Naive thymus-derived CD4-positive, alpha-beta T cell (primary cell): ENCODE measurements at regions of chr16 and their contacts with region 1.

Region 1: DNA sequence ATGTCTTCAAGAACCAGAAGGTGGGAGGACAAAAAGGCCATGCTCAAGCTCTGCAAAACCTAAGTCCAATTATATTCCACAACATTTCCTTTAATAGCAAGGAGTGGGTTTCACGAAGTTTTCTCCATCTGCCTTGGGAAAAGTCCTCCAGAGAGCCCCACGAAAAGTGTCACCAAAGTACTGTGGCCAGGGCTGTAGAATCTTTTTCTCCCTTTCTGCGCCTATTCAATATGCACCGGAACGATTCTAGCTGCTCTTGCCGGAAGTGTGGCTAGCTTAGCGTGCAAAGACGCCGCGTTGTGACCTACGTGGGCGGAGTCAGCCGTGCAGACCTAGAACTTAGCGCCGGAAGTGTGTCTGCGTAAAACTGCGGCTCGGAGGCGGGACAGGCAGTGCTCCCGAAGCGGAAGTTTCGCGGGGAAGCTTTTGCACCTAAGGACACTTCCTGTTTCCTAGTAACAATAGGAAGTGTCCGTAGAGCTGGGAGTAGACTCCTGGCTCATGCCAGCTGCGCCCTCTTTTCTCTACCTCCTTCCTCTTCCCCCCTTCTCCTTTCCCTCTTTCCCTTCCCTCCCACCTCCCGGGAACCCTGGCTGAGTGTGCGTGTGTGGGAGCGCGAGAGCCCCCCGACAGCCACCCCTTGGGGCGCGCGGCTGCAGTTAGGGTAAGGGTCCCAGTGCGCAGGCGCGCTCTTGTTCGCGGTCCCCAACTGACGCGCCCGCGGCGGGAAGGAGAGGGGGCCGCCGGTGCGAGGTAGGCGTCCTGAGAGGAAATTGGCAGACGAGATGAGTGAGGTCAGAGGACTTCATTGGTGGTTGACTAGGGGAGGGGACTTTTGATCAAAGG is at the starts of genes ZNF646 and ZNF668:
- DNase-seq: peak; percentile 84 to 99 (median 96)
- ATAC-seq: peak; percentile 90
- H3K4me3 ChIP-seq: peak within 1 kb of the TSS; percentile 89
- H3K4me3 Mint-ChIP-seq: peak within 1 kb of the TSS; percentile 85 to 99 (median 96)
- H3K27ac ChIP-seq: peak within 1 kb of the TSS; percentile 91
- H3K27ac Mint-ChIP-seq: peak within 1 kb of the TSS; percentile 92 to 98 (median 97)
- H3K4me1 ChIP-seq: peaks cover 9 to 18% of the 10 kb centered on the region in 2 donors
- H3K4me1 Mint-ChIP-seq: peaks cover 32 to 48% (median 36%) of the 10 kb centered on the region in 7 donors
- H3K27me3 ChIP-seq: no peaks in the 10 kb centered on the region
- H3K27me3 Mint-ChIP-seq: no peaks in the 10 kb centered on the region
- total RNA-seq, gene ZNF646: 22.2 to 49.1 (median 30.4) TPM
- total RNA-seq, gene ZNF668: 10.7 to 15.2 (median 12.6) TPM

Region 2: DNA sequence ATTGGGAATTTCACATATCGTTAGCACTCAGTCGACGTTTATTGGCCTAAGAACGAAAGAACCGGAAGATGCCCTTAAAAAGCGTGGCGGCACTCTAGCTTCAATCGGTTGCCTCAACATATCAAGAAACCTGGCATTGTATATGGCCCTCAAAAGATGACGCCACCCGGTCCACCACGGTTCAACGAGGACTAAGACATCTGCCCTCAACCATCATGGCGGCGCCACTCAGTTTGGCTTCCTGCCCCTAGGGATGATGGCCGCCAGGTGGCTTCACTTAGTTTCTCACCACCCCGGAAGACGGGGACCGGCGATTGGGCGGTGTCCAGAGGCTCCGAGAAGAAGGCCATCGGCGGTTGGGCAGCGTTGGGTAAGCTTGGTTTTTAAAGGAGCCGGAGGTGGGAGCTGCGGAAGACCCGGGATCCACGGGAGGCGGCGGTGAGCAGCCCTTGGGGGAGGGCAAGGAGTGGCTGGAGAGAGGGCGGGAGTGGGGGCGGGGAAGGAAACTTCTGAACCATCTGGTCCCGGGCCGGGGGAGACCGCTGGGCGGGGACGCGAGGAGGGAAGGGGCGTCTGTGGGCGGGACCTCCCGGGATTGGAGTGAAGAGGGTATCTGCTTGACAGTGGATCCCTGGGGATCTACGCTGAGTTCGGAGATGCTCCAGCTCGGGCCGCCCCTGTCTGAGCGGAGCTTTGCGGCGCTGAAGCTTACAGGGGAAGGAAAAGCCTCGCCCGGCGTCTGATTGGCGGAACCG is 423.6 kb before region 1 on chr16 and contains the start of gene PRR14:
- CTCF ChIA-PET with region 1: no interaction called
- POLR2A ChIA-PET with region 1: no interaction called
- intact Hi-C with region 1: loop called (anchors 1 to 2 kb)
- DNase-seq: peak; percentile 87 to 99 (median 96)
- ATAC-seq: peak; percentile 93
- H3K4me3 ChIP-seq: peak within 1 kb of the TSS; percentile 100
- H3K4me3 Mint-ChIP-seq: peak within 1 kb of the TSS; percentile 86 to 100 (median 98)
- H3K27ac ChIP-seq: peak within 1 kb of the TSS; percentile 90
- H3K27ac Mint-ChIP-seq: peak within 1 kb of the TSS; percentile 95 to 99 (median 98)
- H3K4me1 ChIP-seq: peaks cover 9 to 10% of the 10 kb centered on the region in 2 donors
- H3K4me1 Mint-ChIP-seq: peaks cover 19 to 39% (median 22%) of the 10 kb centered on the region in 7 donors
- H3K27me3 ChIP-seq: no peaks in the 10 kb centered on the region
- H3K27me3 Mint-ChIP-seq: peaks cover 0 to 3% (median 0%) of the 10 kb centered on the region in 5 donors
- total RNA-seq, gene PRR14: 57.6 to 91.9 (median 82.5) TPM

Region 3: GRCh38 chr16:30874821-30875717 is 199.1 kb before region 1 on chr16:
- CTCF ChIA-PET with region 1: no interaction called
- POLR2A ChIA-PET with region 1: interaction called, 3 read pairs
- intact Hi-C with region 1: loop called in 1 of 2 experiments (anchors 1 kb)
- DNase-seq: peak; percentile 78 to 90 (median 87)
- ATAC-seq: peak; percentile 97
- H3K4me3 ChIP-seq: peak overlapping the region; percentile 83
- H3K4me3 Mint-ChIP-seq: peak overlapping the region; percentile 84 to 98 (median 97)
- H3K27ac ChIP-seq: peak overlapping the region; percentile 87
- H3K27ac Mint-ChIP-seq: peak overlapping the region; percentile 79 to 99 (median 95)
- H3K4me1 ChIP-seq: peaks cover 11 to 25% of the 10 kb centered on the region in 2 donors
- H3K4me1 Mint-ChIP-seq: peaks cover 21 to 40% (median 32%) of the 10 kb centered on the region in 7 donors
- H3K27me3 ChIP-seq: no peaks in the 10 kb centered on the region
- H3K27me3 Mint-ChIP-seq: no peaks in the 10 kb centered on the region

Region 4: DNA sequence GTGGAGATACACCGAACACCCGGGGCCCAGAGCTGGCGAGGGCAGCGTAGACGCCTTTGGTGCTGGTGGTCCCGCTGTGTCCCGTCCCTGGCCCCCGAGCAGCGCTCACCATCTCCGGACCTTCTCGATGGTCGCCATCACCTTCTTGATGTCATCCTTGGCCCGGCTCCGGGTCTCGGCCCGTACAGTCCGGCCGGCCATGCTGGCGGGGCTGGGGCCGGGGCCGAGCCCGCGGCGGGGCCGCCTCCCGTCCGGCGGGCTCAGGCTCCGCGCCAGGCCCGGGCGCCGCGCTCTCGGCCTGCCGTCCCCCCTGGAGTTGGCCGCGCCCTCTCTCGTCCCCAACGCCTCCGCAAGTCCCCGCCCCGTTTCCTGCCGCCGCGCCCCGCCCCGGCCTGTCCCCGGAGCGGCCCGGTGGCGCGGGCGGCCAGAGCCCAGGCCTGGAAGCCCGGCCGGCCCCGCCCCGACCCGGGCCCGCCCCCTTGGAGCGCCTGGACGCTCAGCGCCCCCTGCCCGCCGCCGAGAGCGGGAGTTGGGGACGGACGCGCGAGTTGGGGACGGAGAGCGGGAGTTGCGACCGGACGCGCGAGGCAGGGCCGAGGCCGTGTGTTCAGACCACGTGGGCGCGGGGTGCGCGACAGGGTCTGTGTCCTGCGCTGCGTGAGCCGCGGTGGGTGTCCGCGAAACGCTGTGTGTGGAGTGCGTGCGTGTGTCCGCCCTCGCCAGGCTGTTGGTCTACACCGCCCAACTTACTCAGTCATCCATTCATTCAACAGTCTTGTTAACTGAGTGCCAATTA is 180.2 kb before region 1 on chr16 and contains the start of gene BCL7C:
- CTCF ChIA-PET with region 1: no interaction called
- POLR2A ChIA-PET with region 1: no interaction called
- intact Hi-C with region 1: no loop called
- DNase-seq: peak; percentile 48 to 96 (median 61)
- ATAC-seq: peak; percentile 85
- H3K4me3 ChIP-seq: peak within 1 kb of the TSS; percentile 82
- H3K4me3 Mint-ChIP-seq: peak within 1 kb of the TSS; percentile 84 to 96 (median 90)
- H3K27ac ChIP-seq: peak within 1 kb of the TSS; percentile 82
- H3K27ac Mint-ChIP-seq: peak within 1 kb of the TSS; percentile 80 to 94 (median 91)
- H3K4me1 ChIP-seq: peaks cover 25 to 34% of the 10 kb centered on the region in 2 donors
- H3K4me1 Mint-ChIP-seq: peaks cover 26 to 60% (median 48%) of the 10 kb centered on the region in 7 donors
- H3K27me3 ChIP-seq: no peaks in the 10 kb centered on the region
- H3K27me3 Mint-ChIP-seq: no peaks in the 10 kb centered on the region
- total RNA-seq, gene BCL7C: 17.2 to 23.7 (median 22.7) TPM

Region 5: DNA sequence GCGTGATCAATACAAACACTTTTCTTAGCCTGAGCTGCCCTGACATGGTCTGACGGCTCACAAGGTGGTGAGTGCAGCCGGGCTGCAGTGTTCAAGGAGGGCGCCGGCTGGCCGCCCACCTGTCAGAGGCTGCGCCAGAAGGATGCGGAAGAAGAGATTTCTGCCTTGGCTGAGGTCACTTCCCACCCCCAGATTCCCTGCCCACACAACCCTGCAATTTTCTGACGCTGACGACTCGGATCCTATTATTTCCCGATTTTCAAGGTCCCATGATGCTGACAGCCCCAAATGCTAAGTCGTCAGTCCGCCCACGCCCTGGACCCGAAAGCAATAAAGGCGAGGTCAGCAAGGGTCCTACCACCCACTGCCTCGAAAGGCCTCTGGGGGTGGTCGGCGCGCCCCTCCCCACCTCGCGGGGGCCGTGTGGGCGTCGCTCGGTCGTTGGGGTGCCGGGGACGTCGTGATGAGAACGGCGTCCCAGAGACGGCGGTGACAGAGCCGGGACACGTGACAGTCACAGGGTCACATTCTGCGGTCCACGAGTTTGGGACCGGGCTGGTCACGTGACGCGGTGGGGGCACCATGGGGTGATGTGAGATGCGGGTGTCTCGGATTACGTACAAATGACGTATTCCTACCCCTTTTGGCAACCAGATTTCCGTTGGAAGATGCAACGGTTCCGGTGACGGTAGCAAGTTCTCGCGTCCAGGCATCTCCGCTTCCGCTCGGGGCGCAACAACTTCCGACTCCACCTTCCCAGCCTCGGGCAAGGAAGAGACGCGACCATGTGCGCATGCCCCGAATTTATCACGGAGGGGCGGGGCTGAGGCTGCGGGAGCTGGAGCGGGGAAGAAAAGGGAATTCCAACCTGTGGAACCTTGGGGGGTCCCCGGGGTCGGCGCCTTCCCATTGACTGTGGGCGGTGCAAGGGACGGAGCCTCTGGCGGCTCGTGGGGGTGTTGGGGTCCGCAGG is 41.2 kb before region 1 on chr16 and contains the start of gene STX4:
- CTCF ChIA-PET with region 1: no interaction called
- POLR2A ChIA-PET with region 1: interaction called, 29 read pairs
- intact Hi-C with region 1: loop called (anchors 1 kb)
- DNase-seq: peak; percentile 90 to 100 (median 97)
- ATAC-seq: peak; percentile 89
- H3K4me3 ChIP-seq: peak within 1 kb of the TSS; percentile 82
- H3K4me3 Mint-ChIP-seq: peak within 1 kb of the TSS; percentile 78 to 100 (median 96)
- H3K27ac ChIP-seq: peak within 1 kb of the TSS; percentile 93
- H3K27ac Mint-ChIP-seq: peak within 1 kb of the TSS; percentile 84 to 99 (median 97)
- H3K4me1 ChIP-seq: peaks cover 14 to 16% of the 10 kb centered on the region in 2 donors
- H3K4me1 Mint-ChIP-seq: peaks cover 15 to 35% (median 22%) of the 10 kb centered on the region in 7 donors
- H3K27me3 ChIP-seq: no peaks in the 10 kb centered on the region
- H3K27me3 Mint-ChIP-seq: peaks cover 0 to 3% (median 0%) of the 10 kb centered on the region in 5 donors
- total RNA-seq, gene STX4: 77.9 to 114 (median 100) TPM

Region 6: DNA sequence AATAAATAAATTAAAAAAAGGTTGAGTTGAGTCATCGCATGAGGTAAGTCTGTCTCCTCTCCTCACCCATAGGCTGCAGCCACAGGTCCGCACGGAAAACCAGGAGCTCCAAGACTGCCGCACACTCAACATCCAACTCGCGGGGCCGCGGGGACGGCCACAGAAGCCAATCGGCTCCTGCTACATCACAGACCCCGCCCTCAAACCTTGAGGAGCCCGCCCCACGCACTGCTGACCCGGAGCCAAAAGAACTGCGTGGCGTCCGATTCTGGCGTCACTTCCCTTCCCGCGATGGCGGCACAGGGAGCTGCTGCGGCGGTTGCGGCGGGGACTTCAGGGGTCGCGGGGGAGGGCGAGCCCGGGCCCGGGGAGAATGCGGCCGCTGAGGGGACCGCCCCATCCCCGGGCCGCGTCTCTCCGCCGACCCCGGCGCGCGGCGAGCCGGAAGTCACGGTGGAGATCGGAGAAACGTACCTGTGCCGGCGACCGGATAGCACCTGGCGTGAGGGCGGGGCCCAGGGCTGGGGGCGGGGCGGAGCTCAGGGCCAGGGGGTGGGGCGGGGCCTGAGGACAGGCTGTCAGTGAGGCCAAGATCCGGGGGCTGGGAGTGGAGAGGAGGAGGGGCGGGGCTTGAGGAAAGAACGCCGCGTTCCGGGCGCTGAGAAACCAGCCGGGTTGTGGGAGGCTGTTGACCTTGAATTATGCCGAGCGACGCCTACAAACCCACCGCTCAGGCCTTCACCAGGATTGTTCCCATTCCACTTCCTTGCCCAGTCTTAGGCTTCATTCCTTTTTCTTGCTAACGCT is 43.4 kb after region 1 on chr16 and contains the start of gene KAT8:
- CTCF ChIA-PET with region 1: interaction called, 4 read pairs
- POLR2A ChIA-PET with region 1: interaction called, 35 read pairs
- intact Hi-C with region 1: loop called (anchors 1 kb)
- DNase-seq: peak; percentile 88 to 99 (median 97)
- ATAC-seq: peak; percentile 95
- H3K4me3 ChIP-seq: peak within 1 kb of the TSS; percentile 65
- H3K4me3 Mint-ChIP-seq: peak within 1 kb of the TSS; percentile 86 to 95 (median 90)
- H3K27ac ChIP-seq: peak within 1 kb of the TSS; percentile 98
- H3K27ac Mint-ChIP-seq: peak within 1 kb of the TSS; percentile 77 to 96 (median 89)
- H3K4me1 ChIP-seq: peaks cover 7 to 15% of the 10 kb centered on the region in 2 donors
- H3K4me1 Mint-ChIP-seq: peaks cover 12 to 32% (median 24%) of the 10 kb centered on the region in 7 donors
- H3K27me3 ChIP-seq: no peaks in the 10 kb centered on the region
- H3K27me3 Mint-ChIP-seq: no peaks in the 10 kb centered on the region
- total RNA-seq, gene KAT8: 63.0 to 134 (median 112) TPM

Region 7: DNA sequence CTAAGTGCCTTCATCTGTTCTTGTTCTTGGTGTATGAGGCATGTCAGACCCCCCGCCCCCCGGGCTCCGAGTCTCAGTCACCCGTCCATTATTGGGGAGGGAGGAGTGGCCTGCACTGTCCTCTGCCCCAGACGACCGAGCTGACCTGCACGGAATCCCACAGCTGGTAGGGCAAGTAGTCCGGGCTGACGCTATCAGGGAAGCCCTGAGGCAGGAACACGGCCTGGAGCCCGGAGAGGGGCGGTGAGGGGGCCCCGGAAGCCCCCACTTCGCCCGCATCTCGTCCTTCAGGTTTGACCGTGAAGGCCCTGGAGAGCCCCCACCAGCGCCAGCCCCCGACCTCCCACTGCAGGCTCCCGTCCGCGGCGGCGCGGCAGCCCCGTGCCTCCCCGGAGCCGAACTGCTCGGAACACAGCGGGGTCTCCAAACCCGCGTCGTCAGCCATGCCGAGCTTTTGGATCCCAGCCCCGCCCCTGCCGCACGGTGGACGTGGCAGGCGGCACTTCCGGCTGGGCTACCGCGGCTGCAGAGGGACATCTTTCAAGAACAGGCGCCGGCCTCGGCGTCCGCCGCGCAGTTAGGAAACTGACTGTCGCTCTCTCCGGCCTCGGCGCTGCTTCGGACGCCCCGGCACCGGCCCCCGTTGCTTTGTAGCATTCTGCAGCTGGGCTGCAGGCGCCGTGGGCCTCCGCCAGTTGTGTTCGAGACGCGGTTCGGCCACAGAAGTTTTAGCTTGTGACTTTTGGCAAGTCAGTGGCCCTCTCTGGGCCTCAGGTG is 433.9 kb after region 1 on chr16 and contains the start of gene RUSF1:
- CTCF ChIA-PET with region 1: no interaction called
- POLR2A ChIA-PET with region 1: interaction called, 5 read pairs
- intact Hi-C with region 1: loop called in 1 of 2 experiments (anchors 1 kb)
- DNase-seq: peak; percentile 63 to 84 (median 77)
- ATAC-seq: peak; percentile 93
- H3K4me3 ChIP-seq: peak within 1 kb of the TSS; percentile 77
- H3K4me3 Mint-ChIP-seq: peak within 1 kb of the TSS; percentile 83 to 98 (median 92)
- H3K27ac ChIP-seq: peak within 1 kb of the TSS; percentile 93
- H3K27ac Mint-ChIP-seq: peak within 1 kb of the TSS; percentile 93 to 98 (median 97)
- H3K4me1 ChIP-seq: peaks cover 27% of the 10 kb centered on the region in 2 donors
- H3K4me1 Mint-ChIP-seq: peaks cover 30 to 66% (median 53%) of the 10 kb centered on the region in 7 donors
- H3K27me3 ChIP-seq: no peaks in the 10 kb centered on the region
- H3K27me3 Mint-ChIP-seq: no peaks in the 10 kb centered on the region
- total RNA-seq, gene RUSF1: 47.3 to 118 (median 89.5) TPM